Gastrocnemius medialis (tissue), 4 donors: ENCODE measurements at regions of chr14 and their contacts with region 1.

Region 1: DNA sequence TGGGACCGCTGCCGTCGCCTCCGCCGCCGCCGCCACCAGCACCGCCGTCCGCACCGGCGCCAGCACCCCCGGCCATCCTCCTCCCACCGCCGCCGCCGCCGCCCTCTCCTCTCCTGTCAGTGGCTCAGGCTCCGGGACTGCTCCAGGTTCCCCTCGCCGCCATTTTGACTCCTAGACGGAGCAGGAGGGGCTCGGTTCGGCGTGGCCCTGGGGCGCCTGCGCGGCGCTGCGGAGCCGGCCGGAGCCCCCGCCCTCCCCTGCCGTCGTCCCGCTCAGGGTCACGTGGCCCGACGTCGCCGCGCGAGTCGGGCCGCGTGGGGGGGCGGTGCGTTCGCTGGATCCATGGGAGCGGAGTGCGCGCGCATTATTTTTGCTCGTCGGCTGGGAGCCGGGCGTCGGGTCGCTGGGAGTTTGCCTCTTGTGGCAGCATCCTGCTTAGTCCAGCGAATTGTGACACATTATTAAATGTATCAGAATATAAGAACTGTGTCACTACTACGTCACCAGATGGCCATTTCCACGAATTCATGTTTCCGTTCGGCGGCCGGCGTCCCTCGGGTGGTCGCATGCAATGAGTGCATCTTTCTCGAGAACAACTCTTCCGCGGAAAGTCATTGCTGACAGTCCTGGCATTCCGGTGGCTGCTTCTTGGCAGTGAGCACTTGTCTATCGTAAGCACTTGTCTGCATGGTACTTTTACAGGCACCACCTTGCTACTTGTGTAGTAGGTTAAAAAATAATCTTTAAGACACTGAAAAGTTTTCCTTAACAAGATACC is at the start of gene BTBD7:
- DNase-seq: peak; percentile 88 to 91
- ATAC-seq: peak; percentile 94 to 95
- H3K4me3 ChIP-seq: peak within 1 kb of the TSS; percentile 62 to 77 (median 70)
- H3K27ac ChIP-seq: peak within 1 kb of the TSS; percentile 91 to 97 (median 93)
- H3K4me1 ChIP-seq: peaks cover 31 to 36% of the 10 kb centered on the region in 2 donors
- H3K27me3 ChIP-seq: no peaks in the 10 kb centered on the region
- CTCF ChIP-seq: peak in 2 of 5 experiments; percentile 24 to 25
- POLR2A ChIP-seq: peak; percentile 74 to 77
- total RNA-seq, gene BTBD7: 10.0 to 16.9 (median 12.1) TPM

Region 2: GRCh38 chr14:92748259-92749016 is 584.6 kb before region 1 on chr14 and contains the start of gene LGMN:
- in situ Hi-C with region 1: no loop called
- intact Hi-C with region 1: loop called (anchors 2 kb)
- DNase-seq: peak; percentile 97 to 98
- ATAC-seq: peak; percentile 99
- H3K4me3 ChIP-seq: peak within 1 kb of the TSS; percentile 67 to 99 (median 90)
- H3K27ac ChIP-seq: peak within 1 kb of the TSS; percentile 86 to 98 (median 90)
- H3K4me1 ChIP-seq: peaks cover 8 to 13% of the 10 kb centered on the region in 2 donors
- H3K27me3 ChIP-seq: no peaks in the 10 kb centered on the region
- CTCF ChIP-seq: no peak
- POLR2A ChIP-seq: peak; percentile 94 to 99
- total RNA-seq, gene LGMN: 53.5 to 78.5 (median 62.8) TPM

Region 3: GRCh38 chr14:92951912-92952471 is 381.1 kb before region 1 on chr14:
- in situ Hi-C with region 1: no loop called
- intact Hi-C with region 1: loop called (anchors 5 kb)
- DNase-seq: peak; percentile 39 to 55
- ATAC-seq: peak; percentile 79 to 86
- H3K4me3 ChIP-seq: no peak overlapping the region
- H3K27ac ChIP-seq: no peak overlapping the region
- H3K4me1 ChIP-seq: peaks cover 0 to 3% of the 10 kb centered on the region in 2 donors
- H3K27me3 ChIP-seq: no peaks in the 10 kb centered on the region
- CTCF ChIP-seq: peak; percentile 81 to 95 (median 93)
- POLR2A ChIP-seq: no peak

Region 4: GRCh38 chr14:93184388-93185353 is 148.4 kb before region 1 on chr14 and contains the starts of genes LYSET and MOAP1:
- in situ Hi-C with region 1: no loop called
- intact Hi-C with region 1: loop called (anchors 2 kb)
- DNase-seq: peak; percentile 85 to 86
- ATAC-seq: peak; percentile 95 to 97
- H3K4me3 ChIP-seq: peak within 1 kb of the TSS; percentile 72 to 92 (median 74)
- H3K27ac ChIP-seq: peak within 1 kb of the TSS; percentile 91 to 100 (median 100)
- H3K4me1 ChIP-seq: peaks cover 21 to 28% of the 10 kb centered on the region in 2 donors
- H3K27me3 ChIP-seq: no peaks in the 10 kb centered on the region
- CTCF ChIP-seq: peak in 3 of 5 experiments; percentile 22 to 44 (median 38)
- POLR2A ChIP-seq: peak; percentile 80 to 86
- total RNA-seq, gene LYSET: 9.7 to 16.0 (median 14.0) TPM
- total RNA-seq, gene MOAP1: 31.1 to 41.9 (median 32.2) TPM

Region 5: GRCh38 chr14:94173885-94174603 is 841.0 kb after region 1 on chr14 and contains the start of gene PPP4R4:
- in situ Hi-C with region 1: no loop called
- intact Hi-C with region 1: loop called (anchors 10 kb)
- DNase-seq: peak; percentile 40 to 61
- ATAC-seq: peak; percentile 81 to 89
- H3K4me3 ChIP-seq: peak within 1 kb of the TSS; percentile 59 to 69 (median 64)
- H3K27ac ChIP-seq: peak within 1 kb of the TSS; percentile 53 to 75 (median 68)
- H3K4me1 ChIP-seq: peaks cover 13% of the 10 kb centered on the region in 2 donors
- H3K27me3 ChIP-seq: peaks cover 24 to 36% (median 34%) of the 10 kb centered on the region in 3 donors
- CTCF ChIP-seq: no peak
- POLR2A ChIP-seq: no peak
- total RNA-seq, gene PPP4R4: 0.13 TPM in 1 of 4 donors, not detected in the others